ENCODE measurements at regions of chr11 and their contacts with region 1.

Region 1: DNA sequence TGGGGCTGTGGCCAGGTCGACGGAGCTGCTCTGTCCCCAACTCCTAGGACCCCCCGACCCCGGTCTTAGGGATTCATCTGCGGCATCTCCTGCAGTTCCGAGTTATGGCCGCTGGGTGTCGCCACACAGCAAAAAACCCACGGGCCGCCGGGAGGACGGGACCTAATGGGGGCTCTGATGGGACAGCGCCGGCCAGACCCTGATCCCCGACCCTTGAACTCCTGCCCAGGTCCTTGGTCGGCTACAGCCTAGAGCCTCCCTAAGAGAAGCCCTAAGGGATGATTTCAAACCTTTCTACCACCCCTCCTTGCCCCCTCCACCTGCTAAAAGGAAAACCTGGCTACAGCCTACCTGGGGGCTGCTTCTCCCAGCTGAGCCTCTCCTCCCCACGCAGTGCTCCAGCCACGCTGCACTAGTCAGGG is 30.8 kb upstream of the LRRC10B start:
- H3K4me3 Mint-ChIP-seq: no peak overlapping the region
- H3K27ac Mint-ChIP-seq: peak overlapping the region; percentile 37
- H3K4me1 Mint-ChIP-seq: peaks cover 50% of the 10 kb centered on the region
- H3K27me3 Mint-ChIP-seq: peaks cover 23% of the 10 kb centered on the region

Region 2: DNA sequence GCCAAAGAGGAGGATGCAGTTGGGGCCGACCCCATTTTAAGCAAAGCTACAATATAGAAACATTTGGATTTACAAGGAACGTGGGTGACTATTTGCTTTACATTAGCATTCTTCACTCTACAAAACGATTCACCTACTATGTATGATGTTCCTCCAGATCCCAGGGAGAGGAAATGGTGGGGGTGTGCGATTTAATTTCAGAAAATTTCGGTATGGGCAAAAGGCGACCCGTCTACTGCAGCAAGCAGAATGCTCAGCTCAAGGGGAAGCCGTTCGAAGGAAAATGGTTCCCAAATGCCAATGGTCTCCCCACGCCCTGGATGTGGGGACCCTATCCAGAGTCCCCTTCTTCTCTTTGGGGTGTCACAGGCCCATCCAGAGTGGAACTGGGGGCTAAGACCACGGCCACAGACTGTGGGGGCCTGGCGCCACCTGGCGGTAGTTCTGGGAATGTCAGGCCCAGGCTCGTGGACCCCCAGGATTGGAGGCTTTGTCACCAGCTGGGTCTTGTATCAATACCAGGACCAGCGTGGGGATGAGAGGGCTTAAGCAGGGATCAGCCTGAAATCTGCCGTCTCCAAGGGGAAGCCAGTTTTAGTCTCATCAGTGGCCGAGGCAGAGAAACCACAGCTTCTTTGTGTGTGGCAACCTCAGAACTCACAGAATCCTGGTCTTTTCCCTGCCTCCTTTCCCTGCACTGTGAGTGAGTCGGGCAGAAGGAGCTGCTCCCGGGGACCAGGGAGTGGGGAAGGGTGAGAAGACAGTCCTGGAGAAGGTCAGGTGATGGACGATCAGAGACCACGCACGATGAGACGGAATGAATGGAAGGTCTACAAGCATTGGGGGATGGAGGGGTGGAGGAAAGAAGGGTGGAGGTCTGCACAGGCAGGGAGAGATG is 39.2 kb after region 1 on chr11:
- intact Hi-C with region 1: loop called (anchors 1 kb)
- H3K4me3 Mint-ChIP-seq: peak overlapping the region; percentile 24
- H3K27ac Mint-ChIP-seq: no peak overlapping the region
- H3K4me1 Mint-ChIP-seq: peaks cover 8% of the 10 kb centered on the region
- H3K27me3 Mint-ChIP-seq: peaks cover 53% of the 10 kb centered on the region

Measured in dendritic cell treated with granulocyte-macrophage colony-stimulating factor and Interleukin-4, amounts not matched to agents 40 ng/mL and 50 ng/mL, for 4 days (primary cell).